Activated CD4-positive, alpha-beta T cell treated with anti-CD3 and anti-CD28 coated beads, Interleukin-2, amount 10 ng/mL, durations not matched to agents 24 days and 14 days (primary cell): ENCODE measurements at regions of chr12 and their contacts with region 1.

Region 1: DNA sequence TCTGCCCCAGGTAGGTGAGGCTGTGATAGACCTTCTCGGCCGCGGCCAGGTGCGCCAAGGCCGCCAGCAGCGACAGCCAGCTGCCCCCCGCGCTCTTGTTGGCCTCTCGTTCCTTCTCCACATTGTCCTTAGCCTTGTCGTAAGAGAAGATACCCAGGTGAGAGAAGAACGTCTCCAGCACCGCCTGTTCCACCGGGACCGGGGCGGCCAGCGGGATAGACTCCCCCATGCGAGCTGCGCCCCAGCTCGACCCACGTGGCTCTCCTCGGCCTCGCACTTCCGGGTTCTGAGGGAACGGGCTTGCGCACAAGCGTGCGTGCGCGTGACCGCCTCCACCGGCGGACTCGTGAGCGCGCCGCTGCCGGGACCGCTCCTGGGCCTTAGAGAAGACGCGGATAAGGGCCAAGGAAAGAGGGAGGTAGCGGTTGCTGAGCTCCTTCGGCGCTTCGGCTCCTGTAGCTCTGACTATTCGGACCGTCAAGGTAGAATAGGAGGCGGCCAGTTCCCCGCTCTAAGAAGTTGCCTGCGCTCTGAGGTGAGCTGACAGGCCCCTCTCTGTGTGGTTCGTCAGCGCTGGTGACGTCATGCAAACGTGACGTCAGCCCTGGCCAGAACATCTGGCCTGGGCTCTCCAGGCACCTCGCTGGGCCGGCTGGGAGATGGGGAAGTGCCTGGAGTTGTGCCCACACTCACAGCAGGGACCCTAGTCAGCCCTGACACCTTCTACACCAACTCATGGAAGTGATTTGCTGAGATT is at the start of gene KICS2:
- DNase-seq: peak; percentile 97
- H3K4me3 Mint-ChIP-seq: peak within 1 kb of the TSS; percentile 90
- H3K27ac Mint-ChIP-seq: peak within 1 kb of the TSS; percentile 97
- H3K4me1 Mint-ChIP-seq: peaks cover 22% of the 10 kb centered on the region
- H3K27me3 Mint-ChIP-seq: peaks cover 18% of the 10 kb centered on the region
- total RNA-seq, gene KICS2: 12.8 and 17.1 TPM in 2 replicates

Region 2: GRCh38 chr12:62466594-62467491 is 1755.3 kb before region 1 on chr12 and contains the start of gene MON2:
- intact Hi-C with region 1: loop called (anchors 5 kb)
- DNase-seq: peak; percentile 97
- H3K4me3 Mint-ChIP-seq: peak within 1 kb of the TSS; percentile 86
- H3K27ac Mint-ChIP-seq: peak within 1 kb of the TSS; percentile 93
- H3K4me1 Mint-ChIP-seq: peaks cover 19% of the 10 kb centered on the region
- H3K27me3 Mint-ChIP-seq: peaks cover 8% of the 10 kb centered on the region
- total RNA-seq, gene MON2: 32.8 and 36.4 TPM in 2 replicates

Region 3: GRCh38 chr12:63779498-63780481 is 442.4 kb before region 1 on chr12 and contains the start of gene RXYLT1:
- intact Hi-C with region 1: loop called (anchors 5 kb)
- DNase-seq: peak; percentile 93
- H3K4me3 Mint-ChIP-seq: peak within 1 kb of the TSS; percentile 95
- H3K27ac Mint-ChIP-seq: peak within 1 kb of the TSS; percentile 94
- H3K4me1 Mint-ChIP-seq: peaks cover 19% of the 10 kb centered on the region
- H3K27me3 Mint-ChIP-seq: peaks cover 6% of the 10 kb centered on the region
- total RNA-seq, gene RXYLT1: 26.6 and 27.6 TPM in 2 replicates

Region 4: DNA sequence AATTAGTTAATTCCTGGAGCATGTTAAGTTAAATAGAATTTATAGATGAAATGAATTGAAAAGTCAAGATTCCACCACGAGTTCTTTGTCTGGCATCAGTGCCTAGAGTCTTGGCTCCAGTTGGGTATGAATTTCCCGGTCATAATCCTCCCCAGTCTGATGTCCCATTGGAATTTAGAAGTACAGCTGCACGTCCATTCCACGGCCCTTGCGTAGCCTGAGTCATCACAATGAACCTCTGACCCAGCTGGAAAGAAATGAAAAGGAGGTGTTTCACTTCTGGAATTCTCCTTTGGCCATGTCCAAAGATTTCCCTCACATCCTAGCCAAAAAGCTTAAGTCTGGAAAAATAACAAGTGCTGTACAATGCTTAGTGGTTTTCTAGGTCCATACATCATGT is 122.8 kb before region 1 on chr12:
- intact Hi-C with region 1: no loop called
- DNase-seq: no peak
- H3K4me3 Mint-ChIP-seq: no peak overlapping the region
- H3K27ac Mint-ChIP-seq: no peak overlapping the region
- H3K4me1 Mint-ChIP-seq: no peaks in the 10 kb centered on the region
- H3K27me3 Mint-ChIP-seq: peaks cover 10% of the 10 kb centered on the region

Region 5: DNA sequence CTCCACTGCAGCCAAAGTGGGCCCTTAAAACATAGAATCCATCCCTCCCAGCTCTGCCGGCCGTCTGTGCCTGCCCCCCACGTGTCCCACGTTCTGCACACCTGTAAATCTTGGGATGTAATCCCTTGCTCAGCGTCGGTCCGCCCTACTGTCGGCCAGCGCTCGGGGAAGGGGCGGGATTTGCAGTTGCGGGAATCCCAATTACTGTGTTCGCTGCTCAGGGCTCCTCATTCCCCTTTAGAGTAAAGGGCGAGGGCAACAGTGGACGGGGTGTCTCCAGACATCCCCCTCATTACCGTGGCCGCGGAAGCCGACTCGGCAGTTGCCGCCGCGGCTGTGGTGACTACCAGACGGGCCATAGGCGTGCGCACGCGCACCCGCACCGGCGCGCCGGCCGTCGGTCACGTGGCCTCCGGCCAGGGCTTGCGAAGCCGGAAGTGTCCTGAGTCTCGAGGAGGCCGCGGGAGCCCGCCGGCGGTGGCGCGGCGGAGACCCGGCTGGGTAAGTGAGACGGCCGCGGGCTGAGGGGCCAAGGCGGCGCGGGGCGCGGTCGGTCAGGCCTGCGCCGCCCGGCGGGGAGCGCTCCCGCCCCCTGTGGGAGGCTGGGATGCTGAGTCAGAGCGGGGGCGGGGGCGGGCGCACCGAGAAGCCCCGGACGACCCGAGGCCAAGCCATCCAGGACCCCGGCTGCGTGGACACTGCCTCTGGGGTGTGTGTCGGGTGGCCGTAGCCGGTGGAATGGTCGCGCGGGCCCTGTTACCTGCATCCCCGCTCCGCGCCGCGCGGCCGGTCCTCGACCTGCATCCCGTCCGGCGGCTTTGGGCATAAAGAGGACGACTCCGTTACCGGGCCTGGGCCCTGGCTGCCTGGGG is 229.7 kb after region 1 on chr12 and contains the start of gene TBK1:
- intact Hi-C with region 1: loop called (anchors 2 kb)
- DNase-seq: peak; percentile 93
- H3K4me3 Mint-ChIP-seq: peak within 1 kb of the TSS; percentile 98
- H3K27ac Mint-ChIP-seq: peak within 1 kb of the TSS; percentile 98
- H3K4me1 Mint-ChIP-seq: peaks cover 36% of the 10 kb centered on the region
- H3K27me3 Mint-ChIP-seq: no peaks in the 10 kb centered on the region
- total RNA-seq, gene TBK1: 32.9 and 34.6 TPM in 2 replicates